Esophagus squamous epithelium (tissue), 5 donors: ENCODE measurements at regions of chr5 and their contacts with region 1.

Region 1: GRCh38 chr5:179495906-179496455 is 54.4 kb upstream of the RUFY1 start:
- DNase-seq: no peak
- H3K4me3 ChIP-seq: no peak overlapping the region
- H3K27ac ChIP-seq: no peak overlapping the region
- H3K4me1 ChIP-seq: no peaks in the 10 kb centered on the region
- H3K27me3 ChIP-seq: peaks cover 0 to 39% (median 0%) of the 10 kb centered on the region in 4 donors
- CTCF ChIP-seq: no peak
- POLR2A ChIP-seq: no peak

Region 2: DNA sequence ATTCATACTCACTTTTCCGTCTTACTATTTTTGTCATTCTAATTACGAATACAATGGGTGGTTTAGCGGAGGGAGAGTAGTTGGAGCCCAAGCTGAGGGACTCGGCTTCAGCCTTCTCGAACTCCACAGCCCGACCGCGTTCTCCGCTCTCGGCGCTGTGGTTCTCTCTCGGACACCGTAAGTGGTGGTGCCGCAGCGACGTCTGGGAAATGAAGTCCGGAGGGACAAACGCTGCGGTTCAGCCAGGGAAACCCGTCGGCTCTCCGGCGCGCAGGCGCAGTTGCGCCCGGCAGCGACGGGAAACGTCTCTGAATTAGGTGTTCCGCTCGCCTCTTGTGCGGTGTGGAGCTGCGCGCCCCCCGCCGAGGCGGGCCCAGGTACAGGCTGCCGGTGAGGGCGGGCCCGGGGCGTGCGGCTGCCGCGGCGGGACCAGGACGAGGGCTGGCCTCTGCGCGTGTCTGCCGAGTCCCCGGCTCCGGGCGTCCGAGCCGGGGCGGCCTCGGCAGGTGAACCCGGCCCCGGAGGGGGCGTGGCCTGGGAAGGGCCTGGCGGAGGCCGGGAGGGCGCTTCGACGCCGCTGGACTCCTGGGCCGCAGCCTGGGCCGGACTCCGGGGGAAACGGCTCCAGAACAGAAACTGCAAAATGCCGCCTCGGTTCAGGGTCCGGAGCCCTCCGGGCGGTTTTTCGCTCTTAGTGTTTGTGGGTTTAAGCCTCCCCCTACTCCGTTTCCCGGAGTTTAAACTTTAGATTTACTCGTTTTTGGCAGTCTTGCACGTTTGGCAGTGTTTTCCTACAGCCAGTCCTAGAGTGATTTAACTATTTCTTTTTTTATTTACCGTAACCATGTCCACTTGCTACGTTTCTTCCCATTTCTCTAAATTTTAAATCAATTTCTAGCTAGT is 472.2 kb before region 1 on chr5 and contains the start of gene ZNF879:
- intact Hi-C with region 1: no loop called
- DNase-seq: peak; percentile 74
- H3K4me3 ChIP-seq: peak within 1 kb of the TSS; percentile 52 to 92 (median 69)
- H3K27ac ChIP-seq: peak within 1 kb of the TSS; percentile 70 to 95 (median 84)
- H3K4me1 ChIP-seq: peaks cover 0 to 17% (median 10%) of the 10 kb centered on the region in 3 donors
- H3K27me3 ChIP-seq: no peaks in the 10 kb centered on the region
- CTCF ChIP-seq: peak in 1 of 6 experiments; percentile 32
- POLR2A ChIP-seq: peak in 2 of 4 donors; percentile 27 to 54
- total RNA-seq, gene ZNF879: 2.1 to 8.0 (median 4.6) TPM

Region 3: GRCh38 chr5:179166886-179167841 is 328.8 kb before region 1 on chr5:
- intact Hi-C with region 1: loop called (anchors 2 kb)
- DNase-seq: no peak
- H3K4me3 ChIP-seq: peak overlapping the region in 2 of 4 donors; percentile 34 to 57
- H3K27ac ChIP-seq: no peak overlapping the region
- H3K4me1 ChIP-seq: peaks cover 0 to 16% (median 3%) of the 10 kb centered on the region in 3 donors
- H3K27me3 ChIP-seq: peaks cover 0 to 27% (median 0%) of the 10 kb centered on the region in 4 donors
- CTCF ChIP-seq: peak; percentile 72 to 93 (median 90)
- POLR2A ChIP-seq: no peak

Region 4: DNA sequence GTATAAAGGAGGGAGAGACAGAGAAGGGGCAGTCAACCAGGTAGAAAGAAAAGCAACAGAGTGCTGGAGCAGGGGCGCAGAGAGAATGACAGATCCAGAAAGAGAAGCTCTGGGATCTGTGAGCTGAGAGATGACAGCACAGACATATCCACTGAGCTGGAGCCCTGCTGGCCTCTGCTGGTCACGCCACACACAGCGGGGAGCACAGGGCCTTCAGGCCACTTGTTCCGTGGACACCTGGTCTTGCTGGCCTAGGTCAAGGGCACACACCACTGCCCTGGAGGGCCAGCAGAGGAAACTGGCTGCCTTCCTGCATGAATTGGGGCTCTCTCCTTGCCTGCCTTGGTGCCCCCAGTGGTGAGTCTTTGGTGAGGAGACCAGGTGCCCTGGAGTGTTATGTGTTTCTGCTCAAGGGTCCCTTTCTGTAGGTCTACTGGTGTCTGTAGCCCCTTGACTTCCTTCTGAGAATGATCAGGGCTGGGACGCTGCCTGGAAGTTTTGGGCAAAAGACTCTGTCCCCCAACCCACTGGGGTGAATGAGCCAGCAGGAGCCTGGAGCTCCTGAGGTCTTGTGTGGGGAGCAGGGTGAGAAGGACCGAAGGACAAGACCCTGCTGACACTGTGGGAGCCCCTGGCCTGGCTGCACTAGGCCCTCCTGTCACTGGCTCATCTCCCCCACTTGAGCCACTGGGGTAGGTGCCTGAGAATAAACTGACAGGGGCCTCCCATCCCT is 91.5 kb before region 1 on chr5:
- intact Hi-C with region 1: no loop called
- DNase-seq: no peak
- H3K4me3 ChIP-seq: no peak overlapping the region
- H3K27ac ChIP-seq: no peak overlapping the region
- H3K4me1 ChIP-seq: no peaks in the 10 kb centered on the region
- H3K27me3 ChIP-seq: no peaks in the 10 kb centered on the region
- CTCF ChIP-seq: peak in 1 of 6 experiments; percentile 32
- POLR2A ChIP-seq: no peak

Region 5: DNA sequence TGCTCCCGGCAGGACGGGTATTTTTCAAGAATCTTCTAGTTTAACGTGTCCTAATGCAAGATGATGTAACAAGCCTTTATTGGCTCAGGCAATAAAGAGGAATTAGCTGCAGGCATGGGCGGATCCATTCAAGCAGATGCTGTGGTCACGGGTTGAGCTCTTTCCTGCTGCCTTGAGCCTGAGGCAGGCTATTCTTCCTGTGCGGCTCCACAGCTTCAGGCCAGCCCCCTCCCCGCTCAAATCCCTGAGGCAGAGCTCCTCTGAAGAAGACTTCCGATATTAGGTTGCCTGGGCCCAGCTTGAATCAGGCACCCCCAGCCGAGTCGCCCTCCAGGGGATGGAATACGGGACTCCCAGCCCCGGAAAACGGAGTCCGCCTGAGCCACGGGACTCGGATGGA is 40.7 kb before region 1 on chr5:
- intact Hi-C with region 1: no loop called
- DNase-seq: no peak
- H3K4me3 ChIP-seq: no peak overlapping the region
- H3K27ac ChIP-seq: no peak overlapping the region
- H3K4me1 ChIP-seq: no peaks in the 10 kb centered on the region
- H3K27me3 ChIP-seq: peaks cover 0 to 22% (median 0%) of the 10 kb centered on the region in 4 donors
- CTCF ChIP-seq: no peak
- POLR2A ChIP-seq: no peak

Region 6: DNA sequence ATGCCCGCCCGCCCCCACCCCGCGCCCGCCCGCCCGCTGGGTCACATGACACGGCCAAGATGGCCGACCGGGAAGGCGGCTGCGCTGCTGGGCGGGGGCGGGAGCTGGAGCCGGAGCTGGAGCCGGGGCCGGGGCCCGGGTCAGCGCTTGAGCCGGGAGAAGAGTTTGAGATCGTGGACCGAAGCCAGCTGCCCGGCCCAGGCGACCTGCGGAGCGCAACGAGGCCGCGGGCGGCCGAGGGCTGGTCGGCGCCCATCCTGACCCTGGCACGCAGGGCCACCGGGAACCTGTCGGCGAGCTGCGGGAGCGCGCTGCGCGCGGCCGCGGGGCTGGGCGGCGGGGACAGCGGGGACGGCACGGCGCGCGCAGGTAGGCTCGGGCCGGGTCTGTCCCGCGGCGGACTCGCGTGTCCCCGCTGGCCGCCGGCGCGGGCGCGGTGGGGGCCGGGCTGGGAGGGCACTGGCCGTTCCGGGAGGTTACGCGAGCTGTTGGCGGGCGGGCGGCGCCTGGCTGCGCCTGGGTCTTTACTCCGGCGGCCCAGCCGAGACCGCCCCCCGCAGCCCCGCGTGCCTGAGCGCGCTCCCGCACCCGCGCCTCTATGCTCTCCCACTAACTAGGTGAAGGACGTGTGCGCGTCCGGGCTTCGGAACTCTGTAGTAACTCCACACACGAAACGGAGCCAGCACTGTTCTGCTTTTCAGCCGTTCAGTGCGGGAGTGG is 54.7 kb after region 1 on chr5 and contains the start of gene RUFY1:
- intact Hi-C with region 1: no loop called
- DNase-seq: peak; percentile 49
- H3K4me3 ChIP-seq: peak within 1 kb of the TSS; percentile 76 to 92 (median 79)
- H3K27ac ChIP-seq: peak within 1 kb of the TSS; percentile 93 to 99 (median 96)
- H3K4me1 ChIP-seq: peaks cover 12 to 58% (median 34%) of the 10 kb centered on the region in 3 donors
- H3K27me3 ChIP-seq: no peaks in the 10 kb centered on the region
- CTCF ChIP-seq: peak in 2 of 6 experiments; percentile 29 to 49
- POLR2A ChIP-seq: peak in 3 of 4 donors; percentile 54 to 91 (median 78)
- total RNA-seq, gene RUFY1: 27.1 to 63.8 (median 45.8) TPM